MCF 10A (cell line): ENCODE measurements at regions of chr1 and their contacts with region 1.

Region 1: DNA sequence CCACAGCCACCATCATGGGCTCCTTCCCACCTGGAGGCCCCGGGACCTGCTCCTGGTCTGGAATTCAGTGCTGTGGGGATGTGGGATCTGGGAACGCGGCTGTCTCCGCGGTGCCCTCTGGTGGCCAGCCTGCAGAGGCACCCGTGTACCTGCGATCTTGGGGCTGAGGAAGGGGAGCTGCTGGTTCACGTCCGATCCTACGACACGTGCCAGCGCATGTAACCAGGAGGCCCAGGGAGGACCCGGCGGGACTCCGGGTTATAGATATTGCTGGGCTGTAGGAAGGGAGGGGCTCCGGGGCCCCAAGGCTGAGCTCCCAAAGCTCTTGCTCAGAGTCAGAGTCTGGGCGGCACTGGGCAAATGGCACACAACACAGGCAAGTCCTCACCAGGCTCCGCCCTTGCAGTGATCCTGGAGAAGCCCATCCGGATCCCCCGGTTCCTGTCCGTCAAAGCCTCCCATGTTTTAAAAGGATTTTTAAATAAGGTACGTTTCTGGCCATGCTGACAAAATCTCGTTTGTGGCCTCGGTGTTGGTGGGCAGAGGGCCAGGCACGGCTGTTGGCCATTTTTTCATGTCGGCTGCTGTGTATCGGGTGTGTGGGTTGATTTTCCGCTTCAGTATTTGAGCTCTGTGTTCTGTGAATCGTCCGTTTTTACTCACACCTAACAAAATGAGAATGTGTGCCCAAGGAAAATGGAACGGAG is 20.1 kb downstream of the FAAP20 start:
- DNase-seq: peak; percentile 59
- H3K4me3 Mint-ChIP-seq: no peak overlapping the region
- H3K27ac Mint-ChIP-seq: no peak overlapping the region
- H3K4me1 Mint-ChIP-seq: no peaks in the 10 kb centered on the region
- H3K27me3 Mint-ChIP-seq: no peaks in the 10 kb centered on the region
- CTCF ChIP-seq: peak; percentile 70

Region 2: DNA sequence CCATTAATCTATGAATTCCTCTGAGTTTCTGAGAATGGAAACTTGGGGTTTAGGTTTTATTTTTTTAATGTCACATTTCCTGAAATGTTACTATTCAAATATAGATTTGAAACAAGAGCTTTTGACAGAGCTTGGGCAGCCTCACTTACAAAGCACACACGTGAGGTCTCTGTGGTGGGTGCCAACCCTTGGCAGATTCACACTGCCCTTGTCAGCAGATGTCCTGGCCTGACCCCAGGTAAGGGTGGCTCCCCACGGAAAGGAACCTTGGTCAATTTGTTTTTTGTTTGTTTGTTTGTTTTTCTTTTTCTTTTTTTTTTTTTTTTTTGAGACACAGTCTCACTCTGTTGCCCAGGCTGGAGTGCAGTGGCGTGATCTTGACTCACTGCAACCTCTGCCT is 33.5 kb before region 1 on chr1:
- CTCF ChIA-PET with region 1: interaction called, 19 read pairs
- POLR2A ChIA-PET with region 1: no interaction called
- intact Hi-C with region 1: no loop called
- DNase-seq: no peak
- H3K4me3 Mint-ChIP-seq: no peak overlapping the region
- H3K27ac Mint-ChIP-seq: no peak overlapping the region
- H3K4me1 Mint-ChIP-seq: no peaks in the 10 kb centered on the region
- H3K27me3 Mint-ChIP-seq: no peaks in the 10 kb centered on the region
- CTCF ChIP-seq: no peak

Region 3: DNA sequence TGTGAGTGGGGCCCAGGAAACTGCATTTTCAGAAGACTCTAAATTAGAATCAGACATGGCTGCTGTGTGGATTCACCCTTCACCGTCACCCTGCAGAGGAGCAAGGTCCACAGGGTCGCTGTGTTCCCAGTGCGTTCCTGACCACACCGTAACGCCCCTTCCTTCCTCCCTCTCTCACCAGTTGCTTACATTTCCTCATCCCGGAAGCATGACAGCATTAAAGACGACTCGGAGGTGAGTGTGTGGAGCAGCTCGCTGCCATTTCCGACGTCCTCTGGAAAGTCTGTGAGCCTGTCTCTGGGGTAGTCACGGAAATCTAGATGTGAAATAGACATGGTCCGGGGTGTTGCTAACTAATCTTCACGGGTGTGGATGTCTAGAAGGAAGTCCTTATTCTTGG is 25.8 kb before region 1 on chr1:
- CTCF ChIA-PET with region 1: interaction called, 25 read pairs
- POLR2A ChIA-PET with region 1: no interaction called
- intact Hi-C with region 1: no loop called
- DNase-seq: no peak
- H3K4me3 Mint-ChIP-seq: no peak overlapping the region
- H3K27ac Mint-ChIP-seq: no peak overlapping the region
- H3K4me1 Mint-ChIP-seq: no peaks in the 10 kb centered on the region
- H3K27me3 Mint-ChIP-seq: no peaks in the 10 kb centered on the region
- CTCF ChIP-seq: no peak

Region 4: GRCh38 chr1:2163205-2163604 is 11.3 kb before region 1 on chr1:
- CTCF ChIA-PET with region 1: interaction called, 35 read pairs
- POLR2A ChIA-PET with region 1: no interaction called
- intact Hi-C with region 1: no loop called
- DNase-seq: no peak
- H3K4me3 Mint-ChIP-seq: no peak overlapping the region
- H3K27ac Mint-ChIP-seq: no peak overlapping the region
- H3K4me1 Mint-ChIP-seq: no peaks in the 10 kb centered on the region
- H3K27me3 Mint-ChIP-seq: no peaks in the 10 kb centered on the region
- CTCF ChIP-seq: no peak

Region 5: DNA sequence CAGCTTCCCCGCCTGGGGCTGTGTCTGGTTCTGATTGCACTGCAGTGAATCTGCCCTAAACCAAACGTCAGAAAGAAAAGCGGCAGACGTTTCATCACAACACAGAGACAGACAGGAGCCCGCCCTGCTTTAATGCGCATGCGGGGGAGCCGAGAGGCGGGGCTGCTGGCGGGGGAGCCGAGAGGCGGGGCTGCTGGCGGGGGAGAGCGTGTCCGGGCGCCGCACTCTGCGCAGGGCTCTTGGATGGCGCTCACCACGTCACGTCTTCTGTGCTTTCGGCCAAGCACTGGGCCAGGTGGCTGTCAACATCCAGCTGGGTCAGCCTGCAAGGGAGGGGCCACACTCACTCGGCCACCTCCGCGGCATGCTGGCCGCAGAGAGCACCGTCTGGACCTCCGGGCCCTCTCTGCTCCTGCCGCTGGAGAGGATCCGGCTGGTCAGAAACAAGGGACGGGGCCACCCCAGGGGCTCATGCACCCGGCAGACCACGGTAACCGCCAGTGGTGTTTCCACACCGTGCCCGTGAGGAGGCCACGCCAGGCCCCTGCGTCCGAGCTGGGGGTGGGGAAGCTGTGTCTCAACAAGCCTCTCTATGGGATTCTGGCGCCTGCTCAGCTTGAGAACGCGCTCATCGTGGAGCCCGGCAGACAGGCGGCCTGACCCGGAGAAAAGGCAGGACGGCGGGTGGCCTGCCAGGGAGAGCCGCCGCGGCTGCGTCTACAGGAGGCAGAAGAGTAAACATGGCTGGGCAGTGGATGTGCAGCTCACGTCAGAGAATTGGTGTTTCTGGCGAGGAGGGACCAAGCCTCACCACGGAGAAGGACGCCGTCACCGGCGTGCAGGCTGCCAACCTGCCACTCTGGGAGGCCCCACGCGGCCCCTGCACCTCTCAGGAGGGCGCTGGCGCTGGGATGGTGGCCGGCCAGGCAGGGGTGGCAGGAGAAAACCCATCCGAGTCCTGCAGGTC is 15.2 kb after region 1 on chr1:
- CTCF ChIA-PET with region 1: interaction called, 18 read pairs
- POLR2A ChIA-PET with region 1: interaction called, 3 read pairs
- intact Hi-C with region 1: no loop called
- DNase-seq: peak; percentile 95
- H3K4me3 Mint-ChIP-seq: peak overlapping the region; percentile 83
- H3K27ac Mint-ChIP-seq: peak overlapping the region; percentile 82
- H3K4me1 Mint-ChIP-seq: peaks cover 5% of the 10 kb centered on the region
- H3K27me3 Mint-ChIP-seq: no peaks in the 10 kb centered on the region
- CTCF ChIP-seq: no peak

Region 6: GRCh38 chr1:2494323-2494693 is 319.8 kb after region 1 on chr1:
- CTCF ChIA-PET with region 1: no interaction called
- POLR2A ChIA-PET with region 1: no interaction called
- intact Hi-C with region 1: no loop called
- DNase-seq: peak; percentile 84
- H3K4me3 Mint-ChIP-seq: peak overlapping the region; percentile 25
- H3K27ac Mint-ChIP-seq: peak overlapping the region; percentile 23
- H3K4me1 Mint-ChIP-seq: peaks cover 13% of the 10 kb centered on the region
- H3K27me3 Mint-ChIP-seq: no peaks in the 10 kb centered on the region
- CTCF ChIP-seq: no peak